ENCODE measurements at regions of chr1 and their contacts with region 1.

Region 1: DNA sequence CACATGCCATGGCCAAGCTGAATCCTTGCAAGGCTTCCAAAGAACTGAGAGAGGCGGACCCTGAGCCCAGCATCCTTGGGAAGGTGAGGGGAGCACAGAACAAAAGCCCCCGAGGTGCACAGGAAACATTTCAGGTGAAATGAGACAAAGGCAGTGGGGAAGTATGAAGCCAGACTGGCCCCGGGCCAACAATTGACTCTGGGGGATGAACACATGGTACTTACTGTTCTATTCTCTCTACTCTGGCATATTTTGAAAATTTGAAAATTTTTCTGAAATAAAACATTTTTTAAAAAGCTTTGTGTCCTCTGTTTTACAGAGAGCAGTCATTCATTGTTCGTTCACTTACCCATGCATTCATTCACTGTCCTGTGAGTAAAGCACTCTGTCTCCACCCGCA is 77.7 kb downstream of the GRIK3 start:
- DNase-seq: no peak
- H3K4me3 ChIP-seq: no peak overlapping the region
- CTCF ChIP-seq: no peak
- POLR2A ChIP-seq: no peak

Region 2: DNA sequence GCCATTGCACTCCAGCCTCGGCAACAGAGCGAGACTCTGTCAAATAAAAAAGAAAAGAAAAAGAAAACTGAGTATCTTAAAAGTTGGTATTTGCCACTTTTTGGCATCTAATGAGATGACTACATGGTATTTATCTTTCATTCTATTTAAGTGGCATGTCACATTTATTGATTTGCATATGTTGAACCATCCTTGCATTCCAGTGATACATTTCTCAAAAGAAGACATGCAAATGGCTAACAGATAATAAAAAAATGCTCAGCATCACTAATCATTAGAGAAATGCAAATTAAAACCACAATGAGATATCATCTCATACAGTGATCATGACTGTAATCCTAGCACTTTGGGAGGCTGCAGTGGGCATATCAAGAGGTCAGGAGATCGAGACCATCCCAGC is 1791.7 kb before region 1 on chr1:
- intact Hi-C with region 1: loop called (anchors 10 kb)
- DNase-seq: no peak
- H3K4me3 ChIP-seq: no peak overlapping the region
- CTCF ChIP-seq: no peak
- POLR2A ChIP-seq: no peak